SK-N-SH (cell line): ENCODE measurements at regions of chr1 and their contacts with region 1.

Region 1: GRCh38 chr1:83931658-83932253 is 67.2 kb downstream of the TTLL7 start:
- DNase-seq: peak; percentile 49
- H3K4me3 ChIP-seq: no peak overlapping the region; a peak in 1 of 4 replicates
- H3K27ac ChIP-seq: no peak overlapping the region
- H3K4me1 ChIP-seq: no peaks in the 10 kb centered on the region
- H3K27me3 ChIP-seq: no peaks in the 10 kb centered on the region
- CTCF ChIP-seq: peak; percentile 89
- EP300 ChIP-seq: no peak
- RAD21 ChIP-seq: peak; percentile 92

Region 2: GRCh38 chr1:83942914-83943313 is 11.2 kb after region 1 on chr1:
- CTCF ChIA-PET with region 1: interaction called, 13 read pairs
- POLR2A ChIA-PET with region 1: no interaction called
- DNase-seq: no peak
- H3K4me3 ChIP-seq: no peak overlapping the region
- H3K27ac ChIP-seq: no peak overlapping the region
- H3K4me1 ChIP-seq: no peaks in the 10 kb centered on the region
- H3K27me3 ChIP-seq: no peaks in the 10 kb centered on the region
- CTCF ChIP-seq: no peak
- EP300 ChIP-seq: no peak
- RAD21 ChIP-seq: no peak

Region 3: DNA sequence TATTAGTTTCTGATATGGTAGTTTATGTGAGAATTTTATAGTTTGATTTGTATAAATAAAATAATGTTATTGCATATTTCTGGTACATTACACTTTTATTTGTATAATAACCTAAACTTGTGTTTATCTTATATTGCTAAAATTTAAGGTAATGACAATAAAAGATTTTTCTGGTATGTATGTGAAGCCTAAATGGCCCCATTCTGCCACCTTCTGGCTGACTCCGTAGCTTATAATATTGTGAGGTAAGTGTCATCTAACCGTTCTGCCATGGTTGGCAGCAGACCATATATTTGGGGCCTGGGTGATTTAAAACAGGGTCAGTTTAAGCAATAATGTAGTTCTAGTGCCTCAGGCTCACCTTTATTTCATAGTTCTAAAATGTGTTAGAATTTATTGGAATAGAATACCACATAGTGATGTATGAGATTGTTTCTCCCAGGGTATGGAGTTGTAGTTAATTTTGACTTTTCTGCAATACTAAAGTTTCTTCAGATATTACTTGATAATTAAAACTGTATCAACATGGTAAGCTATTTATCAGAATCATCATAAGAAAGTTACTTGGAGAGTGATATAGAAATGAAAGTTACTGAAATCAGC is 191.1 kb after region 1 on chr1:
- CTCF ChIA-PET with region 1: interaction called, 41 read pairs
- POLR2A ChIA-PET with region 1: no interaction called
- DNase-seq: peak; percentile 26
- H3K4me3 ChIP-seq: no peak overlapping the region
- H3K27ac ChIP-seq: no peak overlapping the region
- H3K4me1 ChIP-seq: peaks cover 2 to 5% of the 10 kb centered on the region in 2 experiments; a peak in 2 of 4 replicates
- H3K27me3 ChIP-seq: no peaks in the 10 kb centered on the region
- CTCF ChIP-seq: peak; percentile 89
- EP300 ChIP-seq: no peak
- RAD21 ChIP-seq: peak; percentile 83

Region 4: GRCh38 chr1:85258536-85259117 is 1326.9 kb after region 1 on chr1:
- CTCF ChIA-PET with region 1: no interaction called
- POLR2A ChIA-PET with region 1: no interaction called
- DNase-seq: no peak
- H3K4me3 ChIP-seq: peak overlapping the region; percentile 75 to 99
- H3K27ac ChIP-seq: no peak overlapping the region; a peak in 2 of 4 replicates
- H3K4me1 ChIP-seq: peaks cover 4 to 12% of the 10 kb centered on the region in 2 experiments; a peak in 3 of 4 replicates
- H3K27me3 ChIP-seq: no peaks in the 10 kb centered on the region
- CTCF ChIP-seq: peak; percentile 18; the same call in 1 of the 2 replicates
- EP300 ChIP-seq: no peak
- RAD21 ChIP-seq: no peak